ENCODE measurements at regions of chr17 and their contacts with region 1.

Region 1: GRCh38 chr17:39621523-39622379 is 5.0 kb upstream of the PPP1R1B start:
- DNase-seq: peak; percentile 96
- ATAC-seq: peak; percentile 79

Region 2: GRCh38 chr17:39508987-39509386 is 112.8 kb before region 1 on chr17:
- intact Hi-C with region 1: no loop called
- DNase-seq: no peak
- ATAC-seq: no peak

Region 3: DNA sequence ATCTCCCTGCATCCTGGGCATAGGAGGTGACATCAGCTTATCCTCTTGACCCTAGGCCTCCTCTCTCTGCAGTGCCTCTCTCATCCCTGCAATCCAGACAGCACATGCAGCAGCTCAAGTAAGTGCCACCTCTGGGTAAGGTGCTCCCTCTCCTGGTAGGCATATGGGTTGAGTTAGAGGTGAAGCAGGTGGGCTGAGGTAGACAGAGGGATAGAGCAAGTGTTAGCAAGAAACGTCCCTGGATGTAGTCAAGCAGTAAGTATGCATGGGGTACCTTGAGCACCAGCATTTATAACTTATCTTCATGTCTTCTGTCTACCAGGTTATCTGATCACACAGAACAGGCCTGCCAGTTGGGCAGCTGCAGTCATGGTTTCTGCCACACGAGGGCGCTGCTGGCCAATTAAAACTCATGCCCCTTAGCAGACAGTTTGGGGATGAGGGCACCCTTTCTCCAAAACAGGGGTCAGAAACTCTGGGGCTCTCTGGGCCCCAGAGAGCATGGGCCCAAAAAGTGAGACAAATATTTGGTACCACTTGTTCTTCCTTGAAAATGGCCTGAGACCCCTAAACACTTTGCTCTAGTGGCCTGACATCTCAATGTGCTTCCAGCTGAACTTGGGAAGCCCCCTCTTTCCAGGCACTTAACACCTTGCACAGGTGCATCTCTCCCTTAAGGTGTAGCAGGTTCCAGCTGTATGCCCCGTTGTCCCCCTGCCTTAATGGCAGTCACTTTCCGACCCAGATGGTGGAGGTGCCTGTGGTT is 73.9 kb before region 1 on chr17:
- intact Hi-C with region 1: loop called (anchors 1 kb)
- DNase-seq: peak; percentile 73
- ATAC-seq: peak; percentile 70

Region 4: DNA sequence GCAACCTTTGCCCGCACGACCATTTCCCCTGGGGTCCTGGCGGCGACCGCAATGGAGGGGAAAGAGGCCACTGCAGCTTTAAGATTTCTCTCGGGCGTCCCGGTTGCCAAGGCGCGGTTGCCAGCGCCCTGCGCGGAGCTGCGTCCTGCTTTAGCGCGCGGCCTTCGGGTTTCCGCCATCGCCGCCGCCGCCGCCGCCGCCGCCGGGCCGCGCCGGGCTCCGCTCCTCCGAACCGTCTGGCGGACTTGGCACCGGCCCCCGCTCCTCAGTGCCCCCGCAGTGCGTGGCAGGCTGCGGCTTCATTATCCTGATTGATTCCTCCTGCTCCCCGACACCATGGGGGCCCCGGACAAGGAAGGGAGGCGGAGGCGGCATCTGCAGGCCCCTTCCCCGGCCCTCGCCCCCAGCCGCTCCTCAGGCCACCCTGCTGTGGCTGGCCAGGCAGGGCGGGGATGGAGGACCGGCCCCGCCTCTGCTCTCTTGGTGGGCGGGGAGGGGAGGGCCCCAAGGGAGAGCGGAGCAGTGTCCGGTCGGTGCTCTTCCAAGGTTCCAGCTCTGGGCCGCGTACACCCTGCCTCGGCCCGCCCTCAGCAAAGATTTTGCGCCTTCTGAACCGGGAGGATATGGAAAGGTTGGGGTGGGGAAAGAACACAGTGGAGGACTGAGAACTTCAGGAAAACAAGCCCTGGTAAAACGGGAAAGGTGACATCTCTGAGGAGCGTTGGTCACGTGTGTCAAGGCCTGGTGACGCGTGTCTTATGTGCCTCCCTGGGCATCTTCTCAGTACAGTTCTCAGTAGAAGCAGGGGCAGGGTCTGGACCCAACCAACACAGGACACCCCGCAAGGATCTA is 48.1 kb before region 1 on chr17:
- intact Hi-C with region 1: loop called (anchors 5 kb)
- DNase-seq: peak; percentile 86
- ATAC-seq: peak; percentile 95

Region 5: GRCh38 chr17:39730095-39730921 is 108.6 kb after region 1 on chr17 and contains the start of gene MIEN1:
- intact Hi-C with region 1: loop called (anchors 5 kb)
- DNase-seq: peak; percentile 97
- ATAC-seq: peak; percentile 97
- total RNA-seq, gene MIEN1: 49.4 TPM

Region 6: GRCh38 chr17:39769974-39770587 is 148.3 kb after region 1 on chr17:
- intact Hi-C with region 1: no loop called
- DNase-seq: no peak
- ATAC-seq: no peak

Region 7: DNA sequence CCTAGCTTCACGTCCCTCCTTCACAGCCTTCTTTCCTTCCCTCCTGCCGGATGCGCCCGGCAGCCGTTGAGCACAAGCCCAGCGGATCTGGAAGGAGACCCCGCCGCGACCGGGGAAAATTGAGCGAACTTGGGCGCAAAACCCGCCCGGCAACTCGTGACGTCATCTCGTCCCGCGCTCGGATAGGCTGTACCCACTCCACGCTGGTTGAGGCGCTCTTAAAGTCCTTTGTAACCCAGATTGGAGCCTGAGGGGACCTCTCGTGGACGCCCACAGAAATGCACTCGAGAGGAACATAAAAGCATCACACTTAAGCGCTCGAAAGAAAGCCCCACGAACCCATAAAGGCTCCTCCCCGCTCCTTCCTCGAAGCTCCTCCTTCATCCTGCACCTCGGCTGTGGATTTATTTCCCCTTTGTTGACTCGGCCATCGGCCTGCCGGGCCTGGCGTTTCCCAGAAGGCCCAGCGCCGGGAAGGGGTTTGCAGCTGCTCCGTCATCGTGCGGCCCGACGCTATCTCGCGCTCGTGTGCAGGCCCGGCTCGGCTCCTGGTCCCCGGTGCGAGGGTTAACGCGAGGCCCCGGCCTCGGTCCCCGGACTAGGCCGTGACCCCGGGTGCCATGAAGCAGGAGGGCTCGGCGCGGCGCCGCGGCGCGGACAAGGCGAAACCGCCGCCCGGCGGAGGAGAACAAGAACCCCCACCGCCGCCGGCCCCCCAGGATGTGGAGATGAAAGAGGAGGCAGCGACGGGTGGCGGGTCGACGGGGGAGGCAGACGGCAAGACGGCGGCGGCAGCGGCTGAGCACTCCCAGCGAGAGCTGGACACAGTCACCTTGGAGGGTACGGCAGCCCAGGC is 358.8 kb after region 1 on chr17 and contains the start of gene PSMD3:
- intact Hi-C with region 1: loop called (anchors 2 kb)
- DNase-seq: peak; percentile 98
- ATAC-seq: peak; percentile 98
- total RNA-seq, gene PSMD3: 86.9 TPM